CD8-positive, alpha-beta T cell (primary cell): ENCODE measurements at regions of chr9 and their contacts with region 1.

Region 1: DNA sequence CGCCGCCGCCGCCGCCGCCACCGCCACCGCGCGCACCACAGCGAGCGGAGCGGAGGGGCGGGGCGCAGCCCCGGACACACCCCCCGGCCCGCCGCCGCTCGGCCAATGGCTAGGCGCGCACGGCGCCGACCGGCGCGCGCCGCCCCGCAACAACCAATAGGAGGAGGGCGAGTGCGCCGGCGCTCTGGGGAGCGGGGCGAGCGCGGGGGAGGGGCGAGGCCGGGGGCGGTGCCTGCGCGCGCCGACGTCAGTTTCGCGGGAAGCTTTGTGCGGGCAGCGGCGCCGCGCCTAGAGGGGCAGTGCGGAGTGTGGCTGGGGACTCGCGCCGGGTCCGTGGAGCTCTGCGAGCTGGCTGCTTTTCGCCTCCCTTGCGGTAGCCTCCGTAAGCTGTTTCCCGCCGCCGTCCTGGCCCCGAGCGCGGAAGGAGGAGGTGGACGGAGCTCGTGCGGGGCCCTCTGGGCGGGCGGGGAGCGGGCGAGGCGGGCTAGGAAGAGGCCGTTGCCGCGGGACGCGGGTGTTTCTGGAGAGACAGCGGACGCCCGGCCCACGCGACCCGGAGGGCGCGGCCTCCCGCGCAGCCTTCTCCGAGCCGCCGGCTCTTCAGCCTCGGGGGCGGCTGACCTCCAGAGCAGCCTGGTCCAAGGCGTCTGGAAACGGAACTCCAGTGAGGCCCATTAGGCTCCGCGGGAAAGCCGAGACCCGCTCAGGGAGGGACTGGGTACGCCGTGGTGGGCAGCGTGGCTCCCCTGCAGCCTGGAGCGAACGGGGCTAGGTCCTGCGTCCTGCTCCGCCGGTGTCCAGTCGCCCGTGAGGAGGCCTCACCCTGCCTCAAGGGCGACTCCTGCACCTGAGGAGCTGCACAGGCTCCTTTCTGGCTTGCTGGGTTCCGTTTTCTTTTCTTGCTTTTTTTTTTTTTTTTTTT is at the start of gene ZMYND19:
- DNase-seq: peak; percentile 78 to 95 (median 90)
- ATAC-seq: peak; percentile 98
- H3K4me3 ChIP-seq: peak within 1 kb of the TSS; percentile 61 to 63
- H3K4me3 Mint-ChIP-seq: peak within 1 kb of the TSS; percentile 93
- H3K27ac ChIP-seq: peak within 1 kb of the TSS in 1 of 2 experiments; percentile 56
- H3K27ac Mint-ChIP-seq: peak within 1 kb of the TSS; percentile 90
- H3K4me1 ChIP-seq: peaks cover 15% of the 10 kb centered on the region
- H3K4me1 Mint-ChIP-seq: peaks cover 12% of the 10 kb centered on the region
- H3K27me3 ChIP-seq: no peaks in the 10 kb centered on the region
- H3K27me3 Mint-ChIP-seq: no peaks in the 10 kb centered on the region
- CTCF ChIP-seq: no peak
- total RNA-seq, gene ZMYND19: 9.0 to 10.3 TPM

Region 2: GRCh38 chr9:137462986-137463930 is 127.5 kb before region 1 on chr9:
- CTCF ChIA-PET with region 1: no interaction called
- POLR2A ChIA-PET with region 1: no interaction called
- intact Hi-C with region 1: no loop called
- DNase-seq: peak in 2 of 9 experiments; percentile 4 to 22
- ATAC-seq: no peak
- H3K4me3 ChIP-seq: peak overlapping the region in 1 of 2 experiments; percentile 78
- H3K4me3 Mint-ChIP-seq: peak overlapping the region; percentile 35
- H3K27ac ChIP-seq: peak overlapping the region in 1 of 2 experiments; percentile 98
- H3K27ac Mint-ChIP-seq: peak overlapping the region; percentile 82
- H3K4me1 ChIP-seq: peaks cover 51% of the 10 kb centered on the region
- H3K4me1 Mint-ChIP-seq: peaks cover 30% of the 10 kb centered on the region
- H3K27me3 ChIP-seq: no peaks in the 10 kb centered on the region
- H3K27me3 Mint-ChIP-seq: no peaks in the 10 kb centered on the region
- CTCF ChIP-seq: no peak

Region 3: DNA sequence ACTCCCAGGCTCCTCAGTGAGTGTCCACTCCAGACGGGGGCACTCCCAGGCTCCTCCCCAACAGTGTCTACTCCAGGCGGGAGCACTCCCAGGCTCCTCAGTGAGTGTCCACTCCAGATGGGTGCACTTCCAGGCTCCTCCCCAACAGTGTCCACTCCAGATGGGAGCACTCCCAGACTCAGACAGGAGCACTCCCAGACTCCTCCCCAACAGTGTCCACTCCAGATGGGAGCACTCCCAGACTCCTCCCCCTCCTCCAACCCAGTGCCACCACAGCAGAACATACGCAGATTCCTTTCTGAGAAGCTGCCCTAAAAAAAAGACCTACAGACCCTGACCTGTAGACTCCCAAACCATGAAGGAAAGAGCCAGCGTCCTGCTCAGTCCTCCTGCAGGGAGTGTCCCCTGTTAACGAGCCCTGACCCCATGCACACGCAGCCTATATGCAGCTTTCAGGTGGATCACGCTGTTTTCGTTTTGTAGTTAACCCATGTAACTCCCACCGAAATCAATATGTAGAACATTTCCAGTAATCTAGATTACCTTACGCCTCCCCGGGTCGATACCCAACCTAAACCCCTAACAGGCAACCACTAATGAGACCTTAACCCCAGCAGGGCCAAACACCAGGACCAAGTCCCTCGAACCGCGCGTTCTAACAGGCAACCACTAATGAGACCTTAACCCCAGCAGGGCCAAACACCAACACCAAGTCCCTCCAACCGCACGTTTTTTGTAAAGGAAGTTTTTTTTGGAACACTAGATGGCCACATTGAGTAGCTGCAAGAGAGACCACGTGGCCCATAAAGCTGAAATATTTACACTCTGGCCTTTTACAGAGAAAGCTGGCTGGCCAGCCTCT is 56.2 kb before region 1 on chr9:
- CTCF ChIA-PET with region 1: no interaction called
- POLR2A ChIA-PET with region 1: no interaction called
- intact Hi-C with region 1: no loop called
- DNase-seq: peak in 2 of 9 experiments; percentile 38 to 54
- ATAC-seq: peak; percentile 49
- H3K4me3 ChIP-seq: no peak overlapping the region
- H3K4me3 Mint-ChIP-seq: no peak overlapping the region
- H3K27ac ChIP-seq: no peak overlapping the region
- H3K27ac Mint-ChIP-seq: no peak overlapping the region
- H3K4me1 ChIP-seq: peaks cover 16% of the 10 kb centered on the region
- H3K4me1 Mint-ChIP-seq: peaks cover 27% of the 10 kb centered on the region
- H3K27me3 ChIP-seq: no peaks in the 10 kb centered on the region
- H3K27me3 Mint-ChIP-seq: no peaks in the 10 kb centered on the region
- CTCF ChIP-seq: peak; percentile 36

Region 4: GRCh38 chr9:137578518-137579258 is 12.0 kb before region 1 on chr9 and contains the start of gene DPH7:
- CTCF ChIA-PET with region 1: interaction called, 22 read pairs
- POLR2A ChIA-PET with region 1: interaction called, 7 read pairs
- intact Hi-C with region 1: no loop called
- DNase-seq: peak; percentile 91 to 98 (median 96)
- ATAC-seq: peak; percentile 96
- H3K4me3 ChIP-seq: peak within 1 kb of the TSS; percentile 58 to 95
- H3K4me3 Mint-ChIP-seq: peak within 1 kb of the TSS; percentile 81
- H3K27ac ChIP-seq: peak within 1 kb of the TSS; percentile 36 to 57
- H3K27ac Mint-ChIP-seq: peak within 1 kb of the TSS; percentile 67
- H3K4me1 ChIP-seq: peaks cover 24% of the 10 kb centered on the region
- H3K4me1 Mint-ChIP-seq: peaks cover 27% of the 10 kb centered on the region
- H3K27me3 ChIP-seq: no peaks in the 10 kb centered on the region
- H3K27me3 Mint-ChIP-seq: no peaks in the 10 kb centered on the region
- CTCF ChIP-seq: peak; percentile 79
- total RNA-seq, gene DPH7: 47.0 to 49.8 TPM